ENCODE measurements at regions of chr1 and their contacts with region 1.

Region 1: GRCh38 chr1:203273206-203273868 is 32.0 kb upstream of the BTG2 start:
- DNase-seq: peak; percentile 93
- H3K4me3 ChIP-seq: no peak overlapping the region
- H3K27ac ChIP-seq: peak overlapping the region; percentile 20
- H3K4me1 ChIP-seq: peaks cover 30% of the 10 kb centered on the region
- H3K27me3 ChIP-seq: no peaks in the 10 kb centered on the region
- CTCF ChIP-seq: peak; percentile 79 to 94

Region 2: GRCh38 chr1:203229471-203230135 is 43.7 kb before region 1 on chr1 and contains the start of gene CHIT1:
- CTCF ChIA-PET with region 1: no interaction called
- dilution Hi-C with region 1: no loop called
- in situ Hi-C with region 1: no loop called
- intact Hi-C with region 1: no loop called
- DNase-seq: no peak
- H3K4me3 ChIP-seq: no peak within 1 kb of the TSS
- H3K27ac ChIP-seq: no peak within 1 kb of the TSS
- H3K4me1 ChIP-seq: no peaks in the 10 kb centered on the region
- H3K27me3 ChIP-seq: no peaks in the 10 kb centered on the region
- CTCF ChIP-seq: no peak
- total RNA-seq, gene CHIT1: under 0.01 TPM in 1 of 2 donors, not detected in the other

Region 3: GRCh38 chr1:203252678-203253077 is 20.7 kb before region 1 on chr1:
- CTCF ChIA-PET with region 1: no interaction called
- dilution Hi-C with region 1: no loop called
- in situ Hi-C with region 1: no loop called
- intact Hi-C with region 1: no loop called
- DNase-seq: no peak
- H3K4me3 ChIP-seq: no peak overlapping the region
- H3K27ac ChIP-seq: no peak overlapping the region
- H3K4me1 ChIP-seq: peaks cover 18% of the 10 kb centered on the region
- H3K27me3 ChIP-seq: no peaks in the 10 kb centered on the region
- CTCF ChIP-seq: no peak

Region 4: GRCh38 chr1:203304919-203305808 is 31.8 kb after region 1 on chr1 and contains the start of gene BTG2:
- CTCF ChIA-PET with region 1: interaction called, 4 read pairs
- dilution Hi-C with region 1: no loop called
- in situ Hi-C with region 1: no loop called
- intact Hi-C with region 1: loop called (anchors 1 kb)
- DNase-seq: peak; percentile 91
- H3K4me3 ChIP-seq: peak within 1 kb of the TSS; percentile 86 to 94 (median 93)
- H3K27ac ChIP-seq: peak within 1 kb of the TSS; percentile 82
- H3K4me1 ChIP-seq: peaks cover 44% of the 10 kb centered on the region
- H3K27me3 ChIP-seq: no peaks in the 10 kb centered on the region
- CTCF ChIP-seq: no peak
- total RNA-seq, gene BTG2: 74.8 to 107 TPM

Region 5: GRCh38 chr1:203326830-203327683 is 53.7 kb after region 1 on chr1:
- CTCF ChIA-PET with region 1: interaction called, 5 read pairs
- dilution Hi-C with region 1: no loop called
- in situ Hi-C with region 1: no loop called
- intact Hi-C with region 1: loop called (anchors 1 kb)
- DNase-seq: peak; percentile 89
- H3K4me3 ChIP-seq: peak overlapping the region; percentile 47 to 59 (median 51)
- H3K27ac ChIP-seq: peak overlapping the region; percentile 37
- H3K4me1 ChIP-seq: peaks cover 14% of the 10 kb centered on the region
- H3K27me3 ChIP-seq: no peaks in the 10 kb centered on the region
- CTCF ChIP-seq: no peak

Region 6: GRCh38 chr1:203440771-203441170 is 167.4 kb after region 1 on chr1:
- CTCF ChIA-PET with region 1: interaction called, 4 read pairs
- dilution Hi-C with region 1: no loop called
- in situ Hi-C with region 1: no loop called
- intact Hi-C with region 1: loop called (anchors 5 kb)
- DNase-seq: peak; percentile 30
- H3K4me3 ChIP-seq: no peak overlapping the region
- H3K27ac ChIP-seq: no peak overlapping the region
- H3K4me1 ChIP-seq: no peaks in the 10 kb centered on the region
- H3K27me3 ChIP-seq: peaks cover 2% of the 10 kb centered on the region
- CTCF ChIP-seq: peak; percentile 12 to 58

Region 7: GRCh38 chr1:203480525-203481084 is 207.3 kb after region 1 on chr1:
- CTCF ChIA-PET with region 1: no interaction called
- dilution Hi-C with region 1: no loop called
- in situ Hi-C with region 1: loop called (anchors 10 kb)
- intact Hi-C with region 1: no loop called
- DNase-seq: peak; percentile 82
- H3K4me3 ChIP-seq: no peak overlapping the region
- H3K27ac ChIP-seq: peak overlapping the region; percentile 1
- H3K4me1 ChIP-seq: peaks cover 21% of the 10 kb centered on the region
- H3K27me3 ChIP-seq: no peaks in the 10 kb centered on the region
- CTCF ChIP-seq: no peak

Region 8: DNA sequence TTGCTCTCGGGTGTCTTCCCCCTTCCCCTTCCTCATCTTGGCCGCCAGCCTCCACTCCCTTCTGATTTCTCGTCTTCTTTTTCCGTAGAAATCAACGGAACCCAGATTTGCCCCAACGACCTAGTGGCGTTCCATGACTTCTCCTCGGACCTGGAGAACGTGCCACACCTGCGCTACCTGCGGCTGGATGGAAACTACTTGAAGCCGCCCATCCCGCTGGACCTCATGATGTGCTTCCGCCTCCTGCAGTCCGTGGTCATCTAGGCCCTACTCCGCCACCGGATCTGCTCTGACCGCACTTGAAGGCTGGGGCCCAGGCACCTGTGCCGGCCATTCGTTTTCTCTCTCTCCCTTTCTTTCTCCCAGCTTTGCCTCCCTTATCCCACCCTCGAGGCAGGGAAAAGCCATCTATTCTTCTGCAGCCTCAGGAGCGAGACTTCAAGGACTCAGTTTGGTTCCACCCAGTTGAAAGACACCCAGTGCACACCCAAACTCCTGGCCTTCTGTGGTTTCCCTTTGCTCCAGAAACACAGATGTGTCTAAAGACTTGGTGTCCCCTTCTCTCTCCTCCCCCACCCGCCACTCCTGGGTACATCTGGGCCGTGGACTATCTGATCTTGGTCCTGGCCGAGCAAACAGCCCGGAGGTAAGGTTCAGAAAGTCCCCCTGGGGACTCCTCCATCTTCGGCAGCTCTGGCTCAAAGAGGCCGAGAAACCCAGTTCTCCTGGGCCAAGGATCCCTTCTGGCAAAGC is 213.5 kb after region 1 on chr1:
- CTCF ChIA-PET with region 1: interaction called, 6 read pairs
- dilution Hi-C with region 1: no loop called
- in situ Hi-C with region 1: loop called (anchors 10 kb)
- intact Hi-C with region 1: loop called (anchors 1 kb)
- DNase-seq: no peak
- H3K4me3 ChIP-seq: no peak overlapping the region
- H3K27ac ChIP-seq: no peak overlapping the region
- H3K4me1 ChIP-seq: peaks cover 5% of the 10 kb centered on the region
- H3K27me3 ChIP-seq: no peaks in the 10 kb centered on the region
- CTCF ChIP-seq: no peak

Region 9: DNA sequence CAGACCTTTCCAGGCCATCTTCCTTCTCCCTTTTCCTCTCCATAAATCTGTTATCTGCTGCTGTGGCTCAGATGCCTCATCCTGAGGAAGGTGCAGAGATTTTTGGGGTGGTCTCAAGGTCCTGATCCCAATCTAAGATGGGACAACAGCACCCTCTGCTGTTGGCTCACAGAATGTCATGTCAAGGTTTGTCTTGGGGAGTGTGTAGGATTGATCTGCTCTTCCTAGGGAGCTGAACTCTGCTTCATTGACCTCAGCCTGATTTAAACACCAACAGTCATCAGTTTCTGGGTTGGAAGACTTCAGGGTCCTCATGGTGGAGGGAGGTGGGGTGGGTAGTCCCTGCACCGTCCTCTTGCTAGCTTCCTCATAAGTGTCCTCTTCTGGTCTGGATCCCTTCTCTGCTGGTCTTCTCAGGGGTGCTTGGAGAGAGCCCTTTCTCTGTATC is 428.8 kb after region 1 on chr1:
- CTCF ChIA-PET with region 1: no interaction called
- dilution Hi-C with region 1: no loop called
- in situ Hi-C with region 1: loop called in 1 of 2 experiments (anchors 10 kb)
- intact Hi-C with region 1: loop called (anchors 5 kb)
- DNase-seq: peak; percentile 37
- H3K4me3 ChIP-seq: no peak overlapping the region
- H3K27ac ChIP-seq: no peak overlapping the region
- H3K4me1 ChIP-seq: peaks cover 18% of the 10 kb centered on the region
- H3K27me3 ChIP-seq: no peaks in the 10 kb centered on the region
- CTCF ChIP-seq: peak; percentile 79 to 80